ENCODE measurements at regions of chr16 and their contacts with region 1.

Region 1: DNA sequence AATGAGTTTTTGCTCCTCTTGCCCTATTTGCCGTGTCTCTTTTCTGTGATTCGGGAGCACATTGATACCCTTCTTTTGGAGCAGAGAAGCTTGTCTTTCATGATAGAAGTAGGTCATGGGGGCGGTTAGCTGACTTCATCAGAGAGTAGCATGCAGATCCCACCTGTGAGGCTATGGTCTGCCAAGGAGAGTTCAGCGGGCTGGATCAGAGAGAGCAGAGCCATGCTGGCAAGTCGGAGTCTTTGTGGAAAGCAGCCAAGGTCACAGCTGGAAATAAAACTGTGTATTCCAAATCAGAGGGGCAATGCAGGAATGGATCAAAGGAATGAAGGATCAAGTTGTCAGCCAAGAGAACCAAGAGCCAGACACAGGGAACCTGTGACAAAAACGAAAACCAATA is 595.9 kb downstream of the WWOX start:
- DNase-seq: no peak
- H3K4me3 ChIP-seq: no peak overlapping the region
- H3K27ac ChIP-seq: no peak overlapping the region
- H3K4me1 ChIP-seq: peaks cover 5% of the 10 kb centered on the region
- H3K27me3 ChIP-seq: no peaks in the 10 kb centered on the region
- CTCF ChIP-seq: no peak

Region 2: GRCh38 chr16:78639775-78640174 is 55.6 kb before region 1 on chr16:
- intact Hi-C with region 1: loop called (anchors 10 kb)
- DNase-seq: no peak
- H3K4me3 ChIP-seq: no peak overlapping the region
- H3K27ac ChIP-seq: no peak overlapping the region
- H3K4me1 ChIP-seq: no peaks in the 10 kb centered on the region
- H3K27me3 ChIP-seq: no peaks in the 10 kb centered on the region
- CTCF ChIP-seq: no peak

Region 3: DNA sequence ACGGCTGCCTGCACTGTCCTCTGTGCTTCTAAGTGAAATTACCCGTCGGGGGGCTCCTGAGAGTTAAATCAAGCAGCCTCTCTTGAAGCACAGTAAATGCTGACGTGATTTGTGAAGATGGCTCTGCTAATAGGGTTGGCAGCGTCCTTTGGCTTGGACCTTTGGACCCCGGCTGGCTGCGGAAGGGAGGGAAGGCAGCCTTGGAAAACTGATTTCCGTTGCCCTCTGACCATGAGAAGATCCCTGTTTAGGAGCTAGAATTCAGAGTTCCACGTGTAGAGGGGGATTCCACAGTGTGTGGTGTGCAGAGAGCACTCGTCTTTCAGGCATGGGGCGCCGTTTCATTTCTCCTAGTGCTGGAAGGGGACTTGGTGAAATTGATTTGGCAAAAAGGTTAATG is 44.9 kb after region 1 on chr16:
- intact Hi-C with region 1: no loop called
- DNase-seq: no peak
- H3K4me3 ChIP-seq: no peak overlapping the region
- H3K27ac ChIP-seq: no peak overlapping the region
- H3K4me1 ChIP-seq: no peaks in the 10 kb centered on the region
- H3K27me3 ChIP-seq: no peaks in the 10 kb centered on the region
- CTCF ChIP-seq: no peak